Activated CD4-positive, alpha-beta T cell treated with anti-CD3 and anti-CD28 coated beads, Interleukin-2, amount 10 ng/mL, durations not matched to agents 24 days and 14 days (primary cell): ENCODE measurements at regions of chr4 and their contacts with region 1.

Region 1: GRCh38 chr4:98601708-98602107 is 56.7 kb downstream of the TSPAN5 start:
- DNase-seq: no peak
- H3K4me3 Mint-ChIP-seq: peak overlapping the region; percentile 72
- H3K27ac Mint-ChIP-seq: peak overlapping the region; percentile 95
- H3K4me1 Mint-ChIP-seq: peaks cover 54% of the 10 kb centered on the region
- H3K27me3 Mint-ChIP-seq: no peaks in the 10 kb centered on the region

Region 2: DNA sequence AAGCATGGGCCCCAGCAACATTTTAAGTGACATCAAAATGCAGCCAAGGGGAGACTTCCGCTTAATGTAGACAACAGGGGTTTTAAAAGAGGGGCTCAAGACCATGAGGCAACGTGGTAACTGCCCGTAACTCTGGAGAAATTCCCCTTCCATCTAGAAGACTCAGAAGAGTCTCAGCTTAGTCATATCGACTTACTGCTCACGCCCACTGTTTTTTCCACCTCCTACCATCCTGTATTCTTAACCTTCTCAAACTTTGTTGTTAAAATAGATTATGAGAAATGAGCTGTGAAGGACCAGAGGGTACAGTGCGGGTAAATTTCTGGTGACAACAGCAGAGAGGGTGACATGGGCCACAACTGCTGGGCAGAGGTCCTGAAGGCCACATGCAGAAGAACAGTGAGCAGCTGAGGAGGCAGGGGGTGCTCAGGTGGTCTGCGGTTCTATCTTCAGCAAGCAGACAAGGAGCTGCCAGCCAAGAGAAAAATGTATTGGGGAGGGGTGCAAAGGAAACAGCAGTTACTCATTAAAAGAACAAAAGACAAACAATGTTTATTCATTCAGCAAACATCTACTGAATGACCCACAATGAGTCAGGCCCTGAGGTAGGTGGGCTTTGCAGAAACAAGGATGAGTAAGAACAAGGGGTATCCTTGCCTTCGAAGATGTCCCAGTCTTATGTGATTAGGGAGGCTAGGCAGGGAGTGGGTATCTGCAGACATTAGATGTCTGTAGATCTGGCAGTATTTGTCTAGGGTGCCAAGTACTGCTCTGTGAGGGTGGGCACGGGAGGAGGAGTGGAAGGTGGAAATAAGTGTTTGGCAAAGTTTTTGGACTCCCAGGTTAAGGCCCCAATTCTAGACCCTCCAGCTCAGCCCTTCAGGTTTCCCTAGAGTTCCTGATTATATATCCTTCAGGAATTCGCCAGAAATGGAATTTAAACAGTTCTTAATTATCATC is 118.6 kb before region 1 on chr4:
- intact Hi-C with region 1: loop called (anchors 1 kb)
- DNase-seq: peak; percentile 75
- H3K4me3 Mint-ChIP-seq: peak overlapping the region; percentile 80
- H3K27ac Mint-ChIP-seq: peak overlapping the region; percentile 99
- H3K4me1 Mint-ChIP-seq: peaks cover 79% of the 10 kb centered on the region
- H3K27me3 Mint-ChIP-seq: no peaks in the 10 kb centered on the region

Region 3: DNA sequence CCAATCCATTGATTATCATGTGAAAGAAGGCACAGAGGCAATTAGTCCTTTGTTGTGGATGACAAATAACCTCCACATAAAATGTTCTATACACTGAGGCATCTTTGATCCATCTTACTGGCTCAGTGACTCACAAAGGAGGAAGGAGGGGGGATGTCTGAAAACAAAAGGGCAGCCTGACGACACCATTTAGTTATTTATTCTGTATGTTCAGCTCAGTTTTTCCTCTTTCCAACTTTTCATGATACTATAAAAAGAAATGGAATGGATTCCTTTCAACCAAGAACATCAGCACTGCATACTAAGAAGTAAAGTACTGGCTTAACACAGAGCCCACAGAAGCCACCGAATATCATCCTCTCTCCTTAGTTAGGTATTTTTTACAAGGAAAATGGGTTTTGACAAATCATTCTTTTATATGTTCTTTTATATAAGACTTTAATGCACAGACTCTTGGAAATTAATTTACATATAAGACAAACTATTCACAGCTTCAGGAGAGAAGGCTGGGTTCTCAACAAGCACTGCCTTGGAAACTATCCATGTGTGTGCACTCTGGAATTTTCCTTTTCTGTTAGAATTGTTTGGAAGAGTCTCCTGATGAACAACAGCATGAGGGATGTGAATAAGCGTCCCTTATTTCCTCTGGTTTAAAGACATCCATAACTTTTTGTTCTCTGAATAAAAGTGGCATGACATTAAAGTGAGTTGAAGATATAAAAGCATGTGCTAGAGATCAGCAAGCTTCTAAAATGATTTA is 78.9 kb before region 1 on chr4:
- intact Hi-C with region 1: loop called (anchors 2 kb)
- DNase-seq: no peak
- H3K4me3 Mint-ChIP-seq: peak overlapping the region; percentile 4
- H3K27ac Mint-ChIP-seq: peak overlapping the region; percentile 77
- H3K4me1 Mint-ChIP-seq: peaks cover 42% of the 10 kb centered on the region
- H3K27me3 Mint-ChIP-seq: no peaks in the 10 kb centered on the region

Region 4: GRCh38 chr4:98630737-98631454 is 29.2 kb after region 1 on chr4:
- intact Hi-C with region 1: no loop called
- DNase-seq: no peak
- H3K4me3 Mint-ChIP-seq: no peak overlapping the region
- H3K27ac Mint-ChIP-seq: no peak overlapping the region
- H3K4me1 Mint-ChIP-seq: peaks cover 29% of the 10 kb centered on the region
- H3K27me3 Mint-ChIP-seq: no peaks in the 10 kb centered on the region

Region 5: DNA sequence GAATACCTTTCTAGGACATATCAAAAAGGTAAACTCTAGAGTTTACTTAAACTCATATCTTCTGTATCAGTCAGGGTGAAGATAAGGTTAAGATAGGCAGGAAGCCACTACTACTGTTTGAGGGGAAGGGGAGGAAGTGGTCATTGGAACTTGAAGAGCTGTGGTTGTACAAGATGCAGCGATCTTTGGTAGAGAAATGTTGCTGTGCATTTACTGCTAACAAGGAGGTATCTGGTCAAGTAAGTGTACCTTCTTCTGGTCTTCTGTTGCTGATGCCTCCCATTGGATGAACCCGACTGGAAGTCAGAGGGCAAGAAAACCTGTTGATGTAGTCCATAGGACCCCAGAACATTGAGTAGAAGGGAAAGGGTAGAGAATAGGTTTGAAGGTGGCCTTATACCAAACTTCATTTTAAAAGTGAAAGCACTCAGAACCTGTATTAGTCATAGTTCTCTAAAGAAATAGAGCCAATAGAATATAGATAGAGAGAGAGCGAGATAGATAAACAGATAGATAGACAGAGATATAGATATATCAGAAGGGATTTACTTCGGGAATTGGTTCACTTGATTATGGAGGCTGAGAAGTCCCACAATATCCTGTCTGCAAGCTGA is 104.6 kb after region 1 on chr4:
- intact Hi-C with region 1: loop called (anchors 5 kb)
- DNase-seq: peak; percentile 84
- H3K4me3 Mint-ChIP-seq: peak overlapping the region; percentile 72
- H3K27ac Mint-ChIP-seq: peak overlapping the region; percentile 87
- H3K4me1 Mint-ChIP-seq: peaks cover 23% of the 10 kb centered on the region
- H3K27me3 Mint-ChIP-seq: no peaks in the 10 kb centered on the region

Region 6: GRCh38 chr4:99504804-99505569 is 903.3 kb after region 1 on chr4:
- intact Hi-C with region 1: loop called (anchors 5 kb)
- DNase-seq: no peak
- H3K4me3 Mint-ChIP-seq: no peak overlapping the region
- H3K27ac Mint-ChIP-seq: peak overlapping the region; percentile 45
- H3K4me1 Mint-ChIP-seq: peaks cover 34% of the 10 kb centered on the region
- H3K27me3 Mint-ChIP-seq: no peaks in the 10 kb centered on the region

Region 7: GRCh38 chr4:99949034-99949998 is 1347.6 kb after region 1 on chr4:
- intact Hi-C with region 1: loop called (anchors 5 kb)
- DNase-seq: peak; percentile 96
- H3K4me3 Mint-ChIP-seq: no peak overlapping the region
- H3K27ac Mint-ChIP-seq: no peak overlapping the region
- H3K4me1 Mint-ChIP-seq: peaks cover 26% of the 10 kb centered on the region
- H3K27me3 Mint-ChIP-seq: no peaks in the 10 kb centered on the region